GM10248 (cell line): ENCODE measurements at regions of chr6 and their contacts with region 1.

Region 1: DNA sequence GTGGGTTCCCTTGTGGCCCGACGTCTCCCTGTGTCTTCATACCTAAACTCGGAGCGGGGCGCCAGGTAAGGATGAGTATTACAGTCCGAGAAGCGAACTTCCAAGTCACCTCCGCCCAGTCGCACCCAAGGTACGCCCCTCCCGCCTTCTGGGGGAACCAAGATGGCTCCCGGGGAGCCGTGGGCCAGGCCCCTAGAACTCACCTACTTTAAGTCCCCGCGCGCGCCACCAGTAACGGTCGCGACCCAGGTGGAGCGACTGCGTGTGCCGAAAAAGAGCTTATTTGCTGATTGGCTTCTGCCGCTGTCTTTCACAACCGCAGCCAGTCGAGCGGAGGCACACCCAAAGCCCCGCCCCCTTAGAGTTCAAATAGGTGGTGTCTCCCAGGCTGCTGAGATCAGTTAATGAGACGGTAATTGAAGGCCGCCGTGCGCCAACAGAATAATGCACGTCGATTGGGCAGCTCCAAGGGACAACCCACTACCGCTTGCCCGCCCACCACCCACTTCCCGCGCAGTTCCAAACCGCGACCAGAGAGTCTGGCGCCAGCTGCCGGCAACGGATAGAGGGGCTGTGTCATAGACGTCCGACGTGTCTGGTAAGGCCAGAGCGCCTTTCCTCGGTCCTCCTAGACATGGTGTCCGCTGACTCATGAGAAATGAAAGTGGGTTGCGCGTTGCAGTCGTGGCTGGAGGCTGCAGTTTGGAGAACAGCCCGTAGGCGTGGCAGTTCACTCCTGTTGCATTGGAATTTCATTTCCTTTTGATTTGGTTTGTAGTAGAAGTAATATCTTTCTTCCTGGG is at the start of gene MDC1:
- DNase-seq: peak; percentile 95
- CTCF ChIP-seq: no peak

Region 2: DNA sequence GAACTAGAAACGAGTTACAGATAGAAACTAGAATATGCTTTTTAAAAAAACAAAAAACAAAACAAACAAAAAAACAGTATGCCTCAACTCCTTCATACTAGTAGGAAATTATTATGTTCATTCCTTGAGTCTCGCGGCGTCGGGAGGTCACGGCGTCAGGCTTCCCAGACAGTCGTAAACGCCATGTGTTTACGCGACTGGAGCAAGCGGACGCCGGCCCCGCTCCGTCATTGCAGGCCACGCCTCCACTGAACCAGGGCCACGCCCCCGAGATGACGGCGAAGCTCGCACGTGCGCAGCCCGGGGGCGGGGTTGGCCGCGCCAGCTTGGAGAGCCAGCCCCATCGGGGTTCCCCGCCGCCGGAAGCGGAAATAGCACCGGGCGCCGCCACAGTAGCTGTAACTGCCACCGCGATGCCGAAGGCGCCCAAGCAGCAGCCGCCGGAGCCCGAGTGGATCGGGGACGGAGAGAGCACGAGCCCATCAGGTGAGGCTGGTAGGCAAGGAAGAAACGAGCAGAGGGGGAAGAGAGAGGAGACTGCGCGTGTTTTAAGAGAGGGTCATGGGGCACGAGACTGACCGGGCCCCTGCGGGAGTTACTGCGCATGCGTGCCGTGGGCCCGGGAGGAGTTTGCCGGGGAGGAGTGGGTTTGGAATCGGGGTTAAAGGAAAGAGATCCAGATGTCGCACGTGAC is 146.0 kb before region 1 on chr6 and contains the start of gene ABCF1:
- CTCF ChIA-PET with region 1: no interaction called
- POLR2A ChIA-PET with region 1: interaction called, 10 read pairs
- DNase-seq: peak; percentile 99
- CTCF ChIP-seq: no peak

Region 3: DNA sequence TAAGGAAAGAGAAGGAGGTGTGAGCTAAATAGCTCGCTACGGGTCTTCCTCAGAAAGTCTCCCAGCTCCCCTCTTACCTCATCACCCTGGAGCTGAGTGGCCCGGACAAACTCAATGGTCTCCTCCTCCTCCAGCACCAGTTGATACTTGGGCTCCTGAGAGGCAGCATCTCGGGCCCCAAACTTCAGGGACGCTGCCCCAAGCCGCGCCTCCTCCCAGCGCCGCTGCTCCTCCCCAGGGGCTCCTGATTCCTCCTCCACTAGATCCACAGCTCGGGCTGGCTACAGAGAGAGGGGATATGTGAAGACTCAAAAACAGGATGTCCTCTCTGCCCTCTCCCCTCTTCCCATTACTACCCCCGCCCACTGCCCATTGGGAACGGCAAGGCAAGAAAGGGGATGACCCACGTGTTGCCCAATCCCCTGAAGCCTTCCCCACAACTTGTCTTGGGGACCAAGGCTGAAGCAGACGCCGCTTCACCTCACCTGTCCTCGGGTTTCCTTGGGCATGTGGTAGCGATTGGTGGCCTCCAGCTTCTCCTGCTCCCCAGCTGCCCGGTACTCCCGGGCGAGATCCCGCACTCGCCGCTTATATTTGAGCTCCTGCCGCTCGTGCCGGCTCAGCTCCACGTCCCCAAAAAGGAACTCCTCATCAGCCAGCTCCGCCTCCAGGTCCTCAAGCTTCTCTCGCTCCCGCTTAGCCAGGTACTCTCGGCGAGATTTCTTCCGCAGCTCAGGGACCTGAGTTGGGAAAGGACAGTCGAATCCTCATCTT is 52.1 kb before region 1 on chr6:
- CTCF ChIA-PET with region 1: interaction called, 776 read pairs
- POLR2A ChIA-PET with region 1: no interaction called
- DNase-seq: no peak
- CTCF ChIP-seq: no peak

Region 4: DNA sequence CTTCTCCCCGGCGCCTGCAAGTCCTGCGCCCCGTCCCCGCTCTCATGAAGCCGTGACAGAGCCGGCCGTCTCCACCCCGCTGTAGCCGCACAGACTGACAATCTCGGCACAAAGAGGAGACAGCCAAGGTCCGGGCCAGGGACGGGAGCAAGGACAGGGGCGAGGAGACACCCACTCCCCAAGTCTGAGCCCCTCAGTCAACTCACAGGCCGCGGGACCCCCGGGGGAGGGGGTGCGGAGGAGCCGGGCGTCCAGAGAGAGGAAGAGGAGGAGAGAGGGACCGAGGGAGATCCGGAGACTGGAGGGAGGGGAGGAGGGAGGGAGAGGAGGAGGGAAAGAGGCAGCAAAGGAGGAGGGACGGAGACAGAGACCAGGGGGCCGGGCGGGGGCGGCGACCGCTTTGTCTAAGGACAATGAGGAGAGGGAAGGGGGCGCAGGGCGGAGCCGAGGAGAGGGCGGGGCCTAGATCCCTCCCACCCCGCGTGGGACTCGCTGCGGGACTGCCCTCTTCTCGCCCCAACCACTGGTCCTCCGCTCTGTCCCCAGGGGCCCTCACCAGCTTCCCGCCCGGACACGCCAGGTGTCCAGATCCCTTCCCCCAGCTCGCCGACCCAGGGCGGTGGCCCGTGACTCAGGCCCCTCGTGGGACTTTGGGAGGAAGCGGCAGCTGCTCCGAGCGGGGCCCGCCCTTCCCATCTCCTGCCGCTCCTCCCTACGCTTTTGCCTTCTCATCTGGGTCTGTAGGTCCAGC is 30.2 kb before region 1 on chr6:
- CTCF ChIA-PET with region 1: interaction called, 776 read pairs
- POLR2A ChIA-PET with region 1: interaction called, 17 read pairs
- DNase-seq: peak; percentile 90
- CTCF ChIP-seq: no peak

Region 5: GRCh38 chr6:30754631-30755030 is 37.4 kb after region 1 on chr6:
- CTCF ChIA-PET with region 1: interaction called, 14 read pairs
- POLR2A ChIA-PET with region 1: no interaction called
- DNase-seq: no peak
- CTCF ChIP-seq: no peak